Activated CD4-positive, alpha-beta memory T cell treated with anti-CD3 and anti-CD28 coated beads, Interleukin-2, amount 10 ng/mL, durations not matched to agents 7 days and 5 days (primary cell): ENCODE measurements at regions of chr1 and their contacts with region 1.

Region 1: GRCh38 chr1:212477014-212477679 is 44.4 kb downstream of the NENF start:
- DNase-seq: peak; percentile 79
- H3K4me3 Mint-ChIP-seq: no peak overlapping the region
- H3K27ac Mint-ChIP-seq: no peak overlapping the region
- H3K4me1 Mint-ChIP-seq: peaks cover 19% of the 10 kb centered on the region
- H3K27me3 Mint-ChIP-seq: peaks cover 19% of the 10 kb centered on the region

Region 2: GRCh38 chr1:212021563-212021962 is 455.6 kb before region 1 on chr1:
- CTCF ChIA-PET with region 1: no interaction called
- POLR2A ChIA-PET with region 1: no interaction called
- DNase-seq: no peak
- H3K4me3 Mint-ChIP-seq: no peak overlapping the region
- H3K27ac Mint-ChIP-seq: no peak overlapping the region
- H3K4me1 Mint-ChIP-seq: peaks cover 7% of the 10 kb centered on the region
- H3K27me3 Mint-ChIP-seq: no peaks in the 10 kb centered on the region

Region 3: GRCh38 chr1:212488397-212489283 is 11.5 kb after region 1 on chr1:
- CTCF ChIA-PET with region 1: interaction called, 18 read pairs
- POLR2A ChIA-PET with region 1: no interaction called
- DNase-seq: peak; percentile 47
- H3K4me3 Mint-ChIP-seq: no peak overlapping the region
- H3K27ac Mint-ChIP-seq: no peak overlapping the region
- H3K4me1 Mint-ChIP-seq: peaks cover 4% of the 10 kb centered on the region
- H3K27me3 Mint-ChIP-seq: peaks cover 4% of the 10 kb centered on the region